GM12878 (cell line): ENCODE measurements at regions of chr12 and their contacts with region 1.

Region 1: DNA sequence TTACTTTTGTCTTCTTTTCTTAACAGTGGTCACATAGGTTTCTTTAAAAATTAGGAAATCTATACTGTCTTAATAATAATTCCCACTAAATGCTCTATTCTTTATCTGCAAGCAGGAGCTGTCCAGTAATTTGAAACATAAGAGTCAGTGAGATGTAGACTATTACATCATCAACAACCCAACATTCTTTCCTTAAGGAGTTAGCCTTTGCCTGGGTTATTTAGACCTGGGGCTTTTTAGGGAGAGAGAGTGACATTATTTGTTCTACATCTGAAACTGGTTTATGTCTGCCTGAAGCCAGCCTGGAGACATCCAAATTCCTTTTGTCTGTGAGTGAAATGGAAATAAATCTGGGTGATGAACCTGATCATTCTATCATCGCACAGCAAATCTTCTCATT is 294.5 kb downstream of the TMTC2 start:
- DNase-seq: no peak
- ATAC-seq: no peak
- H3K4me3 ChIP-seq: no peak overlapping the region
- H3K27ac ChIP-seq: no peak overlapping the region
- H3K4me1 ChIP-seq: no peaks in the 10 kb centered on the region
- H3K27me3 ChIP-seq: no peaks in the 10 kb centered on the region
- CTCF ChIP-seq: no peak
- EP300 ChIP-seq: no peak
- POLR2A ChIP-seq: no peak
- RAD21 ChIP-seq: no peak

Region 2: GRCh38 chr12:82996160-82996812 is 15.1 kb after region 1 on chr12:
- CTCF ChIA-PET with region 1: no interaction called
- POLR2A ChIA-PET with region 1: no interaction called
- RAD21 ChIA-PET with region 1: no interaction called
- SMC1A ChIA-PET with region 1: interaction called, 3 read pairs
- in situ Hi-C with region 1: no loop called
- intact Hi-C with region 1: loop called (anchors 1 kb)
- DNase-seq: no peak
- ATAC-seq: peak; percentile 92
- H3K4me3 ChIP-seq: no peak overlapping the region
- H3K27ac ChIP-seq: no peak overlapping the region
- H3K4me1 ChIP-seq: no peaks in the 10 kb centered on the region
- H3K27me3 ChIP-seq: no peaks in the 10 kb centered on the region
- CTCF ChIP-seq: no peak
- EP300 ChIP-seq: 0 out of 4 replicates have a peak, but pooled peaks of 1 of the 2 experiments have one; percentile 11
- POLR2A ChIP-seq: no peak
- RAD21 ChIP-seq: no peak

Region 3: DNA sequence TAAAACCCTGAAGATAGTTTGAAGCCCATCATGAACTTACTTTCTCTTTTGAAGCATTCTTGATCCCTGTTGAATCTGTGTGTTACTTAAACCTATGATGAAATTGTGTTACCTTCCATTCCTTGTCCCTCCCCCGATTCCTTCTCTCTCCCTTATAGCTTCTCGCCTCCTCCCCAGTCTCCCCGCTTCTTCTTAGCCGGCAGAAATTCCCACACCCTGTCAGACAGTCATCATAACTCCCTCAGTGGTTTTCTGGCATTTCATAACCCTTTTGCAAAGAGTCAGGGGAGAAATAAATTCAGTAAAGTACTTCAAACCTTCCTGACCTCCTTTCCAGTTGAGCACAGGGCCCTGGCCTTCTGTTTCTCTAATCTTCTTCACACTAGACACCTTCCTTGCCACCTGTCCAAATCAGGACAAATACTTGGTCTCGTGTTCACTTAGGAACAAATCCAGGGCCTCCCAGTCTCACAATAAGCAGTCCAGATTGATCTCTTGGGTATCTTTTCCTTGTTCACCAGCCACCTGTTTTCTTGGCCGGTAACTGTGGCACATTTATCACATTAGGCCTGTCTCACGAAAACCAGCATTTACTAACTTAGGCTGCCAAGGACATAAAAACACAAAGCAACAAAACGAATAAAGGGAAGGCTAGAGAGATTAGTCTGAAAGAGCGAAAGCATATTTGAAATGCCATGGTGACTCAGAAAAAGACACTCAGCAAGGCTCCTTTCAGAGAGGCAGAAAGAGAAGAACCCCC is 61.5 kb after region 1 on chr12:
- CTCF ChIA-PET with region 1: no interaction called
- POLR2A ChIA-PET with region 1: no interaction called
- RAD21 ChIA-PET with region 1: no interaction called
- SMC1A ChIA-PET with region 1: no interaction called
- in situ Hi-C with region 1: no loop called
- intact Hi-C with region 1: no loop called
- DNase-seq: no peak
- ATAC-seq: no peak
- H3K4me3 ChIP-seq: no peak overlapping the region
- H3K27ac ChIP-seq: no peak overlapping the region
- H3K4me1 ChIP-seq: no peaks in the 10 kb centered on the region
- H3K27me3 ChIP-seq: no peaks in the 10 kb centered on the region
- CTCF ChIP-seq: no peak
- EP300 ChIP-seq: no peak
- POLR2A ChIP-seq: no peak
- RAD21 ChIP-seq: no peak